Activated T-helper 2 cell treated with anti-CD3 and anti-CD28 coated beads, Interferon-gamma antibody, Interleukin-2, Interleukin-4, amounts not matched to agents 10 μg/mL and 5 μg/mL and 100 μg/mL, durations not matched to agents 14 hours and 24 hours and 36 hours (primary cell): ENCODE measurements at regions of chr5 and their contacts with region 1.

Region 1: GRCh38 chr5:140145818-140146522 is 20.2 kb downstream of the IGIP start:
- DNase-seq: peak; percentile 33
- H3K4me3 Mint-ChIP-seq: no peak overlapping the region
- H3K27ac Mint-ChIP-seq: no peak overlapping the region
- H3K4me1 Mint-ChIP-seq: peaks cover 4% of the 10 kb centered on the region
- H3K27me3 Mint-ChIP-seq: peaks cover 37% of the 10 kb centered on the region

Region 2: GRCh38 chr5:139968547-139969261 is 177.3 kb before region 1 on chr5:
- intact Hi-C with region 1: no loop called
- DNase-seq: peak; percentile 80
- H3K4me3 Mint-ChIP-seq: no peak overlapping the region
- H3K27ac Mint-ChIP-seq: no peak overlapping the region
- H3K4me1 Mint-ChIP-seq: no peaks in the 10 kb centered on the region
- H3K27me3 Mint-ChIP-seq: peaks cover 19% of the 10 kb centered on the region

Region 3: DNA sequence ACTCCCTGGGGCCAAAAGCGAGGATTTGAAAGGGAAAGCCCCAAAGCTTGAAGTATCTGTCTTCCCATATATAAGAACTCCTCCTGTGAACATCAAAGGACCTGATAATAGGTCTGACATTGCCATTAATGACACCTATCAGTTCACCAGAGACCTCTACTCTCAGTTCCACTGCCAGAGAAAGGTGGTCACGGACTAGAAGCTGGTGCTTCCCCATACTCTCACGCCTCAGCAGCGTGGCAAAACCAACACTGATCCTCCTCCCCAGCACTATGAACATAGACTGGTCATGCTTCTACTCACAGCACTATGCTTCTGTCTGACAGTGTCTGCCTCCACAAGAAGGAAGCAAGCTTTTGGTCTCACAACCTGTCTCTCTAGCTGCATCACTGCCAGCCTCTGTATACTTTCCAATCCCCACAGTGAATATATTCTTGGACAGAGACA is 140.8 kb before region 1 on chr5:
- intact Hi-C with region 1: no loop called
- DNase-seq: no peak
- H3K4me3 Mint-ChIP-seq: no peak overlapping the region
- H3K27ac Mint-ChIP-seq: no peak overlapping the region
- H3K4me1 Mint-ChIP-seq: no peaks in the 10 kb centered on the region
- H3K27me3 Mint-ChIP-seq: peaks cover 37% of the 10 kb centered on the region

Region 4: DNA sequence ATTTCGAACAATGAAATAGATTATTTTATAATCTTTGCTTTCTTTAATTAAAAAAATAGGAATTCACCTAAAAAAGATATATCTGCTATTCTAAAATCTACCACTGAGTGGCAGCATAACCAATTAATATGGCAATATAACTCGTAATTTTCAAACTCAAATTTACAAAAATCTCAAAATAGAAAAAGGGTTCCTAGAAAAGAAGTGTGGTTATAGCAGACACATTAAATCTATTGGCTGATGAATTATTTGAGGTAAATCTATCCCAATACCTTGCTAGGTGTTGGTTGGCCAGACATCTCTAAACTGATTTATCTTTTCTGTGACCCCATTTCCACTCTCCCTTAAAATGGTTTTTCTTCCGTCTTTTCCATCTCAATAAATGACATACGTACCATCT is 72.7 kb before region 1 on chr5:
- intact Hi-C with region 1: loop called (anchors 2 kb)
- DNase-seq: no peak
- H3K4me3 Mint-ChIP-seq: no peak overlapping the region
- H3K27ac Mint-ChIP-seq: no peak overlapping the region
- H3K4me1 Mint-ChIP-seq: no peaks in the 10 kb centered on the region
- H3K27me3 Mint-ChIP-seq: peaks cover 37% of the 10 kb centered on the region

Region 5: GRCh38 chr5:140107312-140108083 is 38.5 kb before region 1 on chr5:
- intact Hi-C with region 1: loop called (anchors 2 kb)
- DNase-seq: peak; percentile 90
- H3K4me3 Mint-ChIP-seq: peak overlapping the region; percentile 93
- H3K27ac Mint-ChIP-seq: peak overlapping the region; percentile 86
- H3K4me1 Mint-ChIP-seq: peaks cover 33% of the 10 kb centered on the region
- H3K27me3 Mint-ChIP-seq: peaks cover 59% of the 10 kb centered on the region

Region 6: DNA sequence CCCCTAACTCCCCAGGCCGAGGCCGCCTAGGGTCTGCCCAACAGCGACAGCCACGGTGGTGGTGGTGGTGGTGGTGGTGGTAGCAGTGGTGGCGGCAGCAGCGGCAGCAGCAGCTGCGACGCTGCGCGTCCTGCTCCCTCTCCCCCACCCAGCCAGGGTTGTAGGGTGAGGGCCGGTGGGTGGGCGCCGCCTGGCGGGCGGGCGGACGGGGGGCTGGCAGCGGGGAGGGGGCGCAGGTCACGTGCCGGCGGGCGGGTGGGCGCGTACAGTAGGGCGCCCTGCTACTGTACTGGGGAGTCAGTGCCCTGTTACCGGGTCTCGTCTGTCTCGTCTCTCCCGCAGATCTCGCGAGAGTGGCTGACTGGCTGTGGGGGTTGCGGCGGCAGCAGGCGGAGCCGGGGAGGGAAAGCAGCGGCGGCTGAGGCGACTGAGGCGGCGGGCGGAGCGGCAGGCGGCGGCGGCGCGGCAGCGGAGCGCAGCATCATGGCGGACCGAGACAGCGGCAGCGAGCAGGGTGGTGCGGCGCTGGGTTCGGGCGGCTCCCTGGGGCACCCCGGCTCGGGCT is 32.2 kb before region 1 on chr5 and contains the start of gene PURA:
- intact Hi-C with region 1: loop called (anchors 2 kb)
- DNase-seq: peak; percentile 94
- H3K4me3 Mint-ChIP-seq: peak within 1 kb of the TSS; percentile 92
- H3K27ac Mint-ChIP-seq: peak within 1 kb of the TSS; percentile 85
- H3K4me1 Mint-ChIP-seq: peaks cover 50% of the 10 kb centered on the region
- H3K27me3 Mint-ChIP-seq: peaks cover 25% of the 10 kb centered on the region
- total RNA-seq, gene PURA: 10.8 and 11.0 TPM in 2 replicates

Region 7: DNA sequence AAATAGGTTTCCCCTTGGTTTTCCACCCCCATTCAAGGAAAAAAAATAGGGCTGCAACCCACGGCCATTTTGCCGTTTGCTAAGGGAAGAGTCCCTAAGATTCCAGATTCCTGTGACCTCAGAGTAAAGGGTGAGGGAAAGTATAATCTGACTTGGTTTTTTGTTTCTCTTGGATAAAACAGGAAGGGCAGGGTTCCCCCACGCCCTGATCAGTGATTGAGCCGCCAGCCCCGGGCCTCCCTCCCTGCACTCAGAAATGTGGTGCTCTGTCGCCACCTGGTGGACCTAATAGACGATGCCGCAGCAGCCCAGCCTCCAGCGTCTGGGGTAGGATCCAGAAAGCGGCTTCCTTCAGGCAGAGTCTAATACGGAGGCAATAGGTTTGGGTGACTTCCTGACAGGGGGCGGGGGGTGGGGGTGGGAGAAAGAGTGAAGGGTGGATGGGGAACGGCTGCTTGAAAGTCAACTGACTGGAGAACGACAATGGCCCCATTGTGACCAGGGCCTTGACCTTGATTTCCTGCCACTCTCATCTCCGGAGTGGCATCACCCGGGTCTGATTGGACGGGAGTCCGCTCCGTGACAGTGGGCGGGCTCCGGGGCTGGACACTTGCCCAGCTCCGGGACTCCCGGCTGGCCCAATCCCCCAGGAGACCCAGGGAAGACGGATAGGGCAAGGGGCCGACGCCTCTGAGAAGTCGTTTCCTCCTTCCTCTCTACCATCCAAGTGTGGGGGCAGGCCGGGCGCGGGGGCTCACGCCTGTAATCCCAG is 11.2 kb after region 1 on chr5:
- intact Hi-C with region 1: loop called (anchors 1 kb)
- DNase-seq: peak; percentile 77
- H3K4me3 Mint-ChIP-seq: peak overlapping the region; percentile 33
- H3K27ac Mint-ChIP-seq: no peak overlapping the region
- H3K4me1 Mint-ChIP-seq: no peaks in the 10 kb centered on the region
- H3K27me3 Mint-ChIP-seq: peaks cover 4% of the 10 kb centered on the region